Sigmoid colon (tissue), 7 donors: ENCODE measurements at regions of chr19 and their contacts with region 1.

Region 1: DNA sequence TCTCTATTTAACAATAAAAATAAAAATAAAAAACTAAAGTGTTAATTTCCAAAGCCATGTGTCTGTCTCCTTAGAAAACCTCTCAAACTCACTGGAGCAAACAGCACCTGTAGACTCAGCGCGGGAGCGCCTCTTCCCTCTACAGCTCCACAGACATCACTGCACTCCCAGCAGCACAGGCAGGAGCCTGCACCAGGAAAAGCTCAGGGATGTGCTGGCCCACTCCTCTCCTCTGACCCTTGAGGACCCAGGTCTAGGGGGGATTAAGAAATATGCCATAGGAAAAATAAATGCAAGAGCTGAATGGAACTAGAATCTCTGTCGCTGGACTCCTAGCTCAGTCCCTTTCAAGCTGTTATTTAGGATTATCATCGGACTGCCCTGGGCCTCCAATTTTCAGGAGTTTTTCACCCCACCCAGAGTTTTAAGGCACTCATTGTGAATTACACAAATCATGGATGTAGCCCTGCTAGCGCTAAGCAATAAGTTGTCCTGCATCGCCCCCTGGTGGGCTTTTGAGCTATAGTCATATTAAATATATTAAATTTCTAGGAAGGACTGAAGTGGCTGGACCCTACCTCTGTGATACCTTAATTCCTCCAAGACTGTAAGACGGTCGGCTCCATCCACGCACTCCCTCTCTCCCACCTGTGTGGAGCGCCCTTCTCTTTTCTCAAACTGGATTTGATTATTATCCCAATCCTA is 333.9 kb downstream of the UQCRFS1 start:
- DNase-seq: peak; percentile 82
- H3K4me3 ChIP-seq: no peak overlapping the region
- H3K27ac ChIP-seq: no peak overlapping the region
- H3K4me1 ChIP-seq: peaks cover 0 to 17% (median 15%) of the 10 kb centered on the region in 4 donors
- H3K27me3 ChIP-seq: no peaks in the 10 kb centered on the region
- CTCF ChIP-seq: peak; percentile 32 to 68 (median 55)
- EP300 ChIP-seq: no peak
- POLR2A ChIP-seq: no peak

Region 2: GRCh38 chr19:28466107-28467045 is 412.6 kb before region 1 on chr19:
- intact Hi-C with region 1: loop called (anchors 5 kb)
- DNase-seq: peak; percentile 63
- H3K4me3 ChIP-seq: no peak overlapping the region
- H3K27ac ChIP-seq: no peak overlapping the region
- H3K4me1 ChIP-seq: no peaks in the 10 kb centered on the region
- H3K27me3 ChIP-seq: peaks cover 0 to 7% (median 0%) of the 10 kb centered on the region in 3 donors
- CTCF ChIP-seq: peak in 3 of 4 experiments; percentile 50 to 64 (median 59)
- EP300 ChIP-seq: no peak
- POLR2A ChIP-seq: no peak

Region 3: GRCh38 chr19:28710278-28710677 is 168.7 kb before region 1 on chr19:
- intact Hi-C with region 1: no loop called
- DNase-seq: no peak
- H3K4me3 ChIP-seq: no peak overlapping the region
- H3K27ac ChIP-seq: no peak overlapping the region
- H3K4me1 ChIP-seq: no peaks in the 10 kb centered on the region
- H3K27me3 ChIP-seq: no peaks in the 10 kb centered on the region
- CTCF ChIP-seq: peak in 3 of 4 experiments; percentile 36 to 62 (median 46)
- EP300 ChIP-seq: no peak
- POLR2A ChIP-seq: no peak

Region 4: GRCh38 chr19:28737021-28737895 is 141.8 kb before region 1 on chr19:
- intact Hi-C with region 1: loop called (anchors 2 kb)
- DNase-seq: no peak
- H3K4me3 ChIP-seq: peak overlapping the region in 1 of 4 donors; percentile 10
- H3K27ac ChIP-seq: peak overlapping the region in 3 of 4 donors; percentile 34 to 52 (median 50)
- H3K4me1 ChIP-seq: peaks cover 0 to 22% (median 16%) of the 10 kb centered on the region in 4 donors
- H3K27me3 ChIP-seq: no peaks in the 10 kb centered on the region
- CTCF ChIP-seq: peak in 2 of 4 experiments; percentile 41 to 58
- EP300 ChIP-seq: no peak
- POLR2A ChIP-seq: no peak

Region 5: DNA sequence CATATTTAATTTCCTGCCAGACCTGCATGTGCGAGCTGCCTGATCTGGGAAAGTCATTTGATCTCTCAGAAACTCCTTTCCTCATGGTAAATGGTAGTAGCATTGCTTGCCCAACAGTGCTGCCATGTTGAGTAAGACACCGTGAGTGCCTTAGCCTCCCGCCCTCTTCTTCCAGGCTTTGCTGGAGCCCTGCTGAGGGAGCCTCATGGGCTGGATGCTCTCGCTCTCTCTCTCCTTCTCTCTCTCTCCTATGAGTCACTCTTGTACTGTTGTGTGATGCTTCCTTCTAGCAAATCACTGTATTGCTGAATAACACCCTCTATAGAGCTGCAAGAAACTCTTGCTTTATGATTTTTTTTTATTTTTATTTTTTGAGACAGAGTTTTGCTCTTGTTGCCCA is 31.5 kb before region 1 on chr19:
- intact Hi-C with region 1: no loop called
- DNase-seq: no peak
- H3K4me3 ChIP-seq: no peak overlapping the region
- H3K27ac ChIP-seq: no peak overlapping the region
- H3K4me1 ChIP-seq: no peaks in the 10 kb centered on the region
- H3K27me3 ChIP-seq: no peaks in the 10 kb centered on the region
- CTCF ChIP-seq: no peak
- EP300 ChIP-seq: no peak
- POLR2A ChIP-seq: no peak